Motor neuron (in vitro differentiated cells): ENCODE measurements at regions of chr20 and their contacts with region 1.

Region 1: GRCh38 chr20:46757754-46758678 is 48.6 kb downstream of the SLC2A10 start:
- ATAC-seq: peak in 7 of 8 experiments; percentile 42 to 79 (median 45)
- H3K4me3 ChIP-seq: no peak overlapping the region
- H3K27ac ChIP-seq: no peak overlapping the region
- H3K4me1 ChIP-seq: peaks cover 0 to 3% of the 10 kb centered on the region in 2 donors

Region 2: GRCh38 chr20:45254869-45255266 is 1503.1 kb before region 1 on chr20:
- in situ Hi-C with region 1: no loop called
- ATAC-seq: peak in 3 of 8 experiments; percentile 59 to 63 (median 60)
- H3K4me3 ChIP-seq: no peak overlapping the region
- H3K27ac ChIP-seq: no peak overlapping the region
- H3K4me1 ChIP-seq: peaks cover 21% of the 10 kb centered on the region in 2 donors

Region 3: DNA sequence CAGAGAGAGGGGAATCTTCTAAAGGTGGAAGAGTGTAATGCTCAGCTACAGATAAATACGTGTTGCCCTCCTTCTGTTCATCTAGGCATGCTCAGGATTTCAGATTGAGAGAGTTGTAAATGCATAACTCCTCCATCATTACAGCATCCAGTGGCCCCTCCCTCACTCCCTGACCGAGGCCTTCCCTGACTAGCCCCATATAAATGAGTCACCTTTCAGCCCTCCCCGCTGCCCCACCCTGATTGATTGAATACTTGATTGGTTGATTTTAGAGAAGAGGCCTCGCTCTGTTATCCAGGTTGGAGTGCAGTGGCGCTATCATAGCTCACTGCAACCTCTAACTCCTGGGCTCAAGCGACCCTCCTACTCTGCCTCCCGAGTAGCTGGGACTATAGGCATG is 330.3 kb after region 1 on chr20:
- in situ Hi-C with region 1: no loop called
- ATAC-seq: peak in 7 of 8 experiments; percentile 16 to 78 (median 60)
- H3K4me3 ChIP-seq: no peak overlapping the region
- H3K27ac ChIP-seq: no peak overlapping the region
- H3K4me1 ChIP-seq: no peaks in the 10 kb centered on the region

Region 4: DNA sequence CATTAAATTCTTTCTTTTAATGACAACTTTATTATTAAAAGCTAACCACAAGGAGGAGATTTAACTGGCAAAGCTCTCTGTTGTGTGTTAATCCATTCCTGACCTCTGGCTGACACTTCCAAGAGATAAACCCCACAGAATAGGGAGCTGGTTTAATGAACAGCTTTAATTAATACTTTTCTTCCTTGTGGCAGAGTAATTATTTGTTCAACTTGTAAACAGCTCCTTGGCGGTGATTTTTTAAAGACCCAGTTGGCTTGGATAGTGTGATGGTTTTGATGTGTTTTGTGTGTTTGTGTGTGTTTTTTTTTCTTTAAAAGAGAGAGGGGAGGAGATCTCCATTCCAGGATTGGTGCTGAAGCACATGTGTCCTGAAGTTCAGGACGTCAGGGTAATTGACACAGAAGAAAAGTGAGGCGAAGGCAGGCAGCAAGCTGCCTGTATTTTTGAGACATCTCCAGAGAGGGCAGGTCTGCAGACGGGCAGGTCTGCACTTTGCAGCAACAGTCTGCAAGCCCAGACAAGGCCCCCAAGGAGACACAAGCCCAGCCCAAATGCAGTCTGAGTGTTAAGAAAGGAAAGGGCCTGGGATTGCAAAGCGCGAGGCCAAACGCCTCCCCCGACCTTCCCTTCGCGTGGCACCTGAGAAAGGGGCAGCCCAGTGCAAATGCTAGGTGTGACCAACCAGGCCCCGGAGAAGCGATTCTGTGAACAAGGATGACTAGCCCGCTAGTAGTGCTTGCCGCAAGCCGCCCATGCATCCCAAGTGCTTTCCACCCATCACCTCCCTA is 367.8 kb after region 1 on chr20:
- in situ Hi-C with region 1: loop called in 2 of 9 experiments (anchors 25 kb)
- ATAC-seq: peak in 6 of 8 experiments; percentile 16 to 57 (median 29)
- H3K4me3 ChIP-seq: no peak overlapping the region
- H3K27ac ChIP-seq: no peak overlapping the region
- H3K4me1 ChIP-seq: peaks cover 7 to 10% of the 10 kb centered on the region in 2 donors

Region 5: DNA sequence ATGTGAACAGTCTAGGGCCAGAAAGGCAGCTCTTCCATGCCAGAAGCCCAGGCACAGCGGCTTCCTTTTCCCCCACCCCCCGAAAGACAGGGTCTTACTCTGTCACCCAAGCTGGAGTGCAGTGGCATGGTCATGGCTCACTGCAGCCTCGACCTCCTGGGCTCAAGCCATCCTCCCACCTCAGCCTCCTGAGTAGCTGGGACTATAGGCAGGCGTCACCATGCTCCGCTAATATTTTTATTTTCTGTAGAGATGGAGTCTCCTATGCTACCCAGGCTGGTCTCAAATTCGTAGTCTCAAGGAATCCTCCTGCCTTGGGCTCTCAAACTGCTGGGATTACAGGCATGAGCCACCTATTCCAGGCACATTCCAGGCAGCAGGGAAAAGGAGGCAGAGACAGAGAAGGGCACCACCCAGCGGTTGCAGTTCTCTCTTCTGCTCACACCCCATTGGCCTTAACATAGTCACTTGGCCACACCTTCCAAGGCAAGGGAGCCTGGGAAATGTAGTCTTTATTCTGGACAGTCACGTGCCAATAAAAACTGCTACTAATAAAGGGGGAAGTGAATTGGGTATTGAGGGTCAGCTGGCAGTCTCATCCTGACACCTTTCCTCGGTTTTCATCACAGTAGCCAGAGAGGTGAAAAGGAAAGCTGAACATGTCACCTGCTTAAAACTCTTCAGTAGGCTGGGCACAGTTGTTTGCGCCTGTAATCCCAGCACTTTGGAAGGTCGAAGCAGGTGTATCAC is 392.6 kb after region 1 on chr20:
- in situ Hi-C with region 1: loop called in 8 of 9 experiments (anchors 10 to 25 kb)
- ATAC-seq: peak; percentile 99 to 100 (median 99)
- H3K4me3 ChIP-seq: no peak overlapping the region
- H3K27ac ChIP-seq: no peak overlapping the region
- H3K4me1 ChIP-seq: no peaks in the 10 kb centered on the region